ENCODE measurements at regions of chr10 and their contacts with region 1.

Region 1: GRCh38 chr10:131885391-131886161 is 15.2 kb upstream of the PPP2R2D start:
- DNase-seq: peak; percentile 82
- ATAC-seq: peak; percentile 97
- H3K4me3 Mint-ChIP-seq: no peak overlapping the region
- H3K27ac Mint-ChIP-seq: no peak overlapping the region
- H3K4me1 Mint-ChIP-seq: peaks cover 4% of the 10 kb centered on the region
- H3K27me3 Mint-ChIP-seq: no peaks in the 10 kb centered on the region
- CTCF ChIP-seq: peak; percentile 87

Region 2: GRCh38 chr10:131531265-131532190 is 354.0 kb before region 1 on chr10:
- CTCF ChIA-PET with region 1: no interaction called
- POLR2A ChIA-PET with region 1: no interaction called
- intact Hi-C with region 1: no loop called
- DNase-seq: no peak
- ATAC-seq: no peak
- H3K4me3 Mint-ChIP-seq: no peak overlapping the region
- H3K27ac Mint-ChIP-seq: no peak overlapping the region
- H3K4me1 Mint-ChIP-seq: no peaks in the 10 kb centered on the region
- H3K27me3 Mint-ChIP-seq: no peaks in the 10 kb centered on the region
- CTCF ChIP-seq: no peak

Region 3: GRCh38 chr10:131874991-131875451 is 10.6 kb before region 1 on chr10:
- CTCF ChIA-PET with region 1: interaction called, 10 read pairs
- POLR2A ChIA-PET with region 1: no interaction called
- intact Hi-C with region 1: no loop called
- DNase-seq: peak; percentile 76
- ATAC-seq: peak; percentile 91
- H3K4me3 Mint-ChIP-seq: no peak overlapping the region
- H3K27ac Mint-ChIP-seq: no peak overlapping the region
- H3K4me1 Mint-ChIP-seq: peaks cover 4% of the 10 kb centered on the region
- H3K27me3 Mint-ChIP-seq: peaks cover 19% of the 10 kb centered on the region
- CTCF ChIP-seq: peak; percentile 76

Region 4: GRCh38 chr10:131905603-131906272 is 20.2 kb after region 1 on chr10:
- CTCF ChIA-PET with region 1: interaction called, 17 read pairs
- POLR2A ChIA-PET with region 1: no interaction called
- intact Hi-C with region 1: no loop called
- DNase-seq: no peak
- ATAC-seq: no peak
- H3K4me3 Mint-ChIP-seq: no peak overlapping the region
- H3K27ac Mint-ChIP-seq: peak overlapping the region; percentile 86
- H3K4me1 Mint-ChIP-seq: peaks cover 79% of the 10 kb centered on the region
- H3K27me3 Mint-ChIP-seq: no peaks in the 10 kb centered on the region
- CTCF ChIP-seq: no peak

Region 5: GRCh38 chr10:131943021-131943814 is 57.6 kb after region 1 on chr10:
- CTCF ChIA-PET with region 1: interaction called, 33 read pairs
- POLR2A ChIA-PET with region 1: no interaction called
- intact Hi-C with region 1: loop called (anchors 10 kb)
- DNase-seq: peak; percentile 42
- ATAC-seq: peak; percentile 75
- H3K4me3 Mint-ChIP-seq: no peak overlapping the region
- H3K27ac Mint-ChIP-seq: no peak overlapping the region
- H3K4me1 Mint-ChIP-seq: peaks cover 5% of the 10 kb centered on the region
- H3K27me3 Mint-ChIP-seq: no peaks in the 10 kb centered on the region
- CTCF ChIP-seq: peak; percentile 26

Region 6: DNA sequence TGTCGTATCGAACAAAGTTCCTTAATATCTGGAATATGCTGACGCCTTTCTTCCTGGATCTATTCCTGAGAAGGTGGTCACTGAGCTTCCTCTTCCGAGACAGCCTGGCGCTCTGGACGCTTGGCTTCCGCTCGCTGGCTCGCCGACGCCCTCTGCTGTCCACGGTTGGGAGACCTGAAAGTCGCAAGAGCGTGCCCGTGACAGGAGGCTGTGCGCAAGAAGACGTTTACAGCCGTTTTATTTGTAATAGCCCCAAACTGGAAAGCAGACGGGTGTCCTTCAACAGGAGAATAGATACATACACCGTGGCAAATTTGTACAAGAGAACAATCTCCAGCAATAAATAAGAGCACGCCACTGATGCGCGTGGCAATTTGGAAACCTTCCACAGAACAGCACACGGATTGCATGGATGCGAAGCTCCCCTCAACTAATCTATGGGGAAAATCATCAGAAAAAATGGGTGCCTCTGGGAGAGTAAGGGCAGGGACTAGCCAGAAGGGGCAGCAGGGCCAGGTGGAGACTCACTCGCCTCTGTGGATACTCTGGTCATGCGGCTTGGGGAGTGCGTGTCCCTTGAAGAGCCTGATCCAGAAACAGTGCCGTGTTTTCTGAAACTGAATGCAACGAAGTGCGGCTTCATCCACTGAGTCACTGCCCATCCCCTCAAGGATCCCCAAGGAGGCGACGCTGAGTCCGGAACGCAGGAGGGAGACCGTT is 137.7 kb after region 1 on chr10:
- CTCF ChIA-PET with region 1: interaction called, 78 read pairs
- POLR2A ChIA-PET with region 1: interaction called, 5 read pairs
- intact Hi-C with region 1: loop called (anchors 2 kb)
- DNase-seq: peak; percentile 84
- ATAC-seq: no peak
- H3K4me3 Mint-ChIP-seq: no peak overlapping the region
- H3K27ac Mint-ChIP-seq: no peak overlapping the region
- H3K4me1 Mint-ChIP-seq: peaks cover 7% of the 10 kb centered on the region
- H3K27me3 Mint-ChIP-seq: peaks cover 26% of the 10 kb centered on the region
- CTCF ChIP-seq: peak; percentile 94